Aorta (tissue), 5 donors: ENCODE measurements at regions of chr1 and their contacts with region 1.

Region 1: GRCh38 chr1:40079774-40080400 is 17.2 kb downstream of the PPT1 start:
- DNase-seq: no peak
- ATAC-seq: no peak
- H3K4me3 ChIP-seq: no peak overlapping the region
- H3K27ac ChIP-seq: no peak overlapping the region
- H3K4me1 ChIP-seq: no peaks in the 10 kb centered on the region
- H3K27me3 ChIP-seq: no peaks in the 10 kb centered on the region

Region 2: GRCh38 chr1:40389871-40390560 is 310.1 kb after region 1 on chr1:
- intact Hi-C with region 1: loop called in 1 of 2 experiments (anchors 10 kb)
- DNase-seq: no peak
- ATAC-seq: peak; percentile 70
- H3K4me3 ChIP-seq: no peak overlapping the region
- H3K27ac ChIP-seq: no peak overlapping the region
- H3K4me1 ChIP-seq: peaks cover 3 to 6% of the 10 kb centered on the region in 2 donors
- H3K27me3 ChIP-seq: no peaks in the 10 kb centered on the region